A673 (cell line): ENCODE measurements at regions of chr7 and their contacts with region 1.

Region 1: GRCh38 chr7:26155531-26156375 is 3.8 kb downstream of the NFE2L3 start:
- DNase-seq: no peak
- H3K4me3 ChIP-seq: peak overlapping the region; percentile 22
- H3K27ac ChIP-seq: no peak overlapping the region
- H3K4me1 ChIP-seq: peaks cover 13% of the 10 kb centered on the region
- H3K27me3 ChIP-seq: no peaks in the 10 kb centered on the region
- CTCF ChIP-seq: no peak

Region 2: GRCh38 chr7:26195182-26195581 is 39.4 kb after region 1 on chr7:
- CTCF ChIA-PET with region 1: no interaction called
- POLR2A ChIA-PET with region 1: interaction called, 16 read pairs
- intact Hi-C with region 1: no loop called
- DNase-seq: no peak
- H3K4me3 ChIP-seq: no peak overlapping the region
- H3K27ac ChIP-seq: no peak overlapping the region
- H3K4me1 ChIP-seq: peaks cover 47% of the 10 kb centered on the region
- H3K27me3 ChIP-seq: no peaks in the 10 kb centered on the region
- CTCF ChIP-seq: no peak